GM13977 (cell line): ENCODE measurements at regions of chr14 and their contacts with region 1.

Region 1: GRCh38 chr14:76918751-76919543 is 92.7 kb downstream of the LRRC74A start:
- DNase-seq: no peak
- CTCF ChIP-seq: peak; percentile 15

Region 2: GRCh38 chr14:77053046-77053841 is 134.3 kb after region 1 on chr14:
- in situ Hi-C with region 1: loop called (anchors 10 kb)
- DNase-seq: peak; percentile 83
- CTCF ChIP-seq: peak; percentile 95

Region 3: DNA sequence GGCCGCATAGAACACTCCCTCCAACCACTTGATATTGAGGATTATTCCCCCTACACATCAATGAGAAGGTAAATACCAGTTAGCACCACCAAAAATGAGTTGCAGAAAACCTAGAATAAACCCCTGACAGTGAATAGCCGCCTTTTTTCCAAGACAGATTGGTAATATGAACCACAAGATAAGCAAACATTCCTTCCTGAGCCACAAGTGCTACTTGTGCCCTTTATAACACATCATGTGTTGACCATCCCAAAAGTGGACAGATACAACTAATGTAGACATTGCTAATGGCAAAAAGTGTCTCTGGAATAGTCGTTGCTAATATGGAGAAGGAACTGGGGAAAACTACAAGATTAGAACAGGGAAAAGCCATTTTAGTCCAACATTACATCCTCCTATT is 487.1 kb after region 1 on chr14:
- in situ Hi-C with region 1: no loop called
- DNase-seq: no peak
- CTCF ChIP-seq: no peak